Left ventricle myocardium superior (tissue), 1 donor: ENCODE measurements at regions of chr10 and their contacts with region 1.

Region 1: GRCh38 chr10:76311752-76312636 is 880.6 kb downstream of the LRMDA start:
- DNase-seq: peak; percentile 39
- ATAC-seq: peak; percentile 84

Region 2: DNA sequence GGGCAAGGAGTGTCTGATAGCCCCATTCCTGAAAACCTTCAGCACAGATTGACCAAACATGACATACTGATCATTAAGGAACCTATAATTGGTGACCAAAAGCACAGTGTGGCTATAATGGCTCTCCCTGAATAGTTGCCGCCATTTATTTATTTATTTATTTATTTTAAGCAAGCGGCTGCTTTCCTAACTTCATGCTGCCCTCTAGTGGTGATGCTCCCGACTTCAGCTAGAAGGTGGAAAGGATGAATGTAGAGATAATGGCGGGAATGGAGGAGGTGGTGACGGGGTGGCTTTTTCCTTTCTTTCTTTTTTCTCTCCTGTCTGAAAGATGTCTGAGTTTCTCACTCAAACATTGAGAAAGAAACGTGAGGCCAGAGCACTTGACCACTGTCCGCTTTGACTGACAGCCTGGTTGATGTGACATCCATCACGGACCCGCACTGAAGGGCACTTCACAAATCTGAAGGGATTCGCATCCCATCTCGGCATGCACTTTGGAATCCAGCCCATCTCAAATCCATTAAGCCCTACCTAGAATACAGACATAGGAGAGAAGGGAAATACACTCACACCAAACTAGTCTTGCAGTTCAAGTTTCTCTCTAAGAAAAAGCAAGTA is 235.5 kb after region 1 on chr10:
- intact Hi-C with region 1: loop called (anchors 10 kb)
- DNase-seq: peak; percentile 71
- ATAC-seq: peak; percentile 87